RWPE1 (cell line): ENCODE measurements at regions of chr14 and their contacts with region 1.

Region 1: GRCh38 chr14:24058260-24058950 is 6.6 kb downstream of the CARMIL3 start:
- DNase-seq: peak; percentile 65
- H3K27ac ChIP-seq: no peak overlapping the region
- CTCF ChIP-seq: peak; percentile 60

Region 2: GRCh38 chr14:24093901-24094761 is 35.7 kb after region 1 on chr14 and contains the start of gene PCK2:
- CTCF ChIA-PET with region 1: interaction called, 51 read pairs
- POLR2A ChIA-PET with region 1: interaction called, 4 read pairs
- DNase-seq: peak; percentile 97
- H3K27ac ChIP-seq: peak within 1 kb of the TSS; percentile 88
- CTCF ChIP-seq: no peak

Region 3: DNA sequence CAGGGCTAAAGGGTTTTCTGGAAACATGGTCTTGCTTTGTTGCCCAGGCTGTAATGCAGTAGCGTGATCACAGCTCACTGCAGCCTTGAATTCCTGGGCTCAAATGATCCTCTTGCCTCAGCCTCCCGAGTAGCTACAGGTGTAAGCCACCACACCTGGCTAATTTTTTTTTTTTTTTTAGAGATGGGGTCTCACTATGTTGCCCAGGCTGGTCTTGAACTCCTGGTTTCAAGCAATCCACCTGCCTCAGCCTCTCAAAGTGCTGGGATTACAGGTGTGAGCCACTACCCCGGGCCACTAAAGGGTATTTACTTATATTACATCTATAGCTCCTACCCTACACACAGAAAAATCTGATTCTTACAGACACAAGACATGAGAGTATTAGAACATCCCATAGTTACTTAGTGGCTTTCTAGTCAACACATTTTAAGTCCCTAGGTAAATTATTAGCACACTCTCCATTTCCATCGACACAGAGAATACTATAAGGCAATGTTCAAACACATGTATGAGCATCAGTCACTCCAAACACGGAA is 50.0 kb after region 1 on chr14:
- CTCF ChIA-PET with region 1: interaction called, 39 read pairs
- POLR2A ChIA-PET with region 1: no interaction called
- DNase-seq: no peak
- H3K27ac ChIP-seq: no peak overlapping the region
- CTCF ChIP-seq: no peak

Region 4: GRCh38 chr14:24535737-24536136 is 477.3 kb after region 1 on chr14:
- CTCF ChIA-PET with region 1: no interaction called
- POLR2A ChIA-PET with region 1: no interaction called
- DNase-seq: no peak
- H3K27ac ChIP-seq: no peak overlapping the region
- CTCF ChIP-seq: no peak